ENCODE measurements at regions of chr2 and their contacts with region 1.

Region 1: GRCh38 chr2:42141687-42142546 is 27.2 kb upstream of the EML4 start:
- DNase-seq: peak in 1 of 2 donors; percentile 78
- H3K4me3 ChIP-seq: peak overlapping the region; percentile 15 to 40
- H3K27ac ChIP-seq: peak overlapping the region; percentile 65 to 84
- H3K4me1 ChIP-seq: peaks cover 6 to 29% of the 10 kb centered on the region in 2 donors
- H3K27me3 ChIP-seq: no peaks in the 10 kb centered on the region
- CTCF ChIP-seq: no peak

Region 2: GRCh38 chr2:41955316-41956043 is 186.4 kb before region 1 on chr2:
- intact Hi-C with region 1: no loop called
- DNase-seq: no peak
- H3K4me3 ChIP-seq: no peak overlapping the region
- H3K27ac ChIP-seq: no peak overlapping the region
- H3K4me1 ChIP-seq: peaks cover 3% of the 10 kb centered on the region in 2 donors
- H3K27me3 ChIP-seq: no peaks in the 10 kb centered on the region
- CTCF ChIP-seq: no peak

Region 3: GRCh38 chr2:42102024-42102590 is 39.8 kb before region 1 on chr2:
- intact Hi-C with region 1: loop called (anchors 2 kb)
- DNase-seq: peak in 1 of 2 donors; percentile 82
- H3K4me3 ChIP-seq: peak overlapping the region; percentile 54 to 66
- H3K27ac ChIP-seq: peak overlapping the region; percentile 93 to 94
- H3K4me1 ChIP-seq: peaks cover 0 to 35% of the 10 kb centered on the region in 2 donors
- H3K27me3 ChIP-seq: no peaks in the 10 kb centered on the region
- CTCF ChIP-seq: no peak

Region 4: GRCh38 chr2:42192652-42193566 is 51.0 kb after region 1 on chr2:
- intact Hi-C with region 1: no loop called
- DNase-seq: no peak
- H3K4me3 ChIP-seq: no peak overlapping the region
- H3K27ac ChIP-seq: no peak overlapping the region
- H3K4me1 ChIP-seq: peaks cover 0 to 12% of the 10 kb centered on the region in 2 donors
- H3K27me3 ChIP-seq: no peaks in the 10 kb centered on the region
- CTCF ChIP-seq: no peak

Measured in ascending aorta (tissue), 2 donors.